PC-9 (cell line): ENCODE measurements at regions of chr15 and their contacts with region 1.

Region 1: DNA sequence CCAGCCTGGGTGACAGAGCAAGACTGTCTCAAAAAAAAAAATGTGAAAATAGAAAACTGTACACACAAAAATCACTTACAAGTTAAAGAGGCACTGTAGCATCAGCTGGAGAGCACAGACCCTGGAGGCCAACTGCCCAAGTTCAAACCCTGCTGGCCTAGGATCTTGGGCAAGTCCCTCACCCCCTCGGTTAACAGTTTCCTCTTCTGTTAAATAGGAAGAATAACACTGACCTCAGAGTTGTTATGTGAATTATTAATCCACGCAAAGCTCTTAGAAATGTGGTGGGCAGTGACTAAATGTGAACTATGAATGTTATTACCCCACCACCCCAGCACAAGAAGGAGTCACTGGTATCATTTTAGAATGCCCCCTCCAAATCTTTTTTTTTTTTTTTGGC is 11.2 kb downstream of the CIB1 start:
- DNase-seq: no peak
- H3K4me3 ChIP-seq: no peak overlapping the region
- H3K27ac ChIP-seq: no peak overlapping the region
- H3K4me1 ChIP-seq: no peaks in the 10 kb centered on the region
- H3K27me3 ChIP-seq: no peaks in the 10 kb centered on the region
- CTCF ChIP-seq: no peak

Region 2: DNA sequence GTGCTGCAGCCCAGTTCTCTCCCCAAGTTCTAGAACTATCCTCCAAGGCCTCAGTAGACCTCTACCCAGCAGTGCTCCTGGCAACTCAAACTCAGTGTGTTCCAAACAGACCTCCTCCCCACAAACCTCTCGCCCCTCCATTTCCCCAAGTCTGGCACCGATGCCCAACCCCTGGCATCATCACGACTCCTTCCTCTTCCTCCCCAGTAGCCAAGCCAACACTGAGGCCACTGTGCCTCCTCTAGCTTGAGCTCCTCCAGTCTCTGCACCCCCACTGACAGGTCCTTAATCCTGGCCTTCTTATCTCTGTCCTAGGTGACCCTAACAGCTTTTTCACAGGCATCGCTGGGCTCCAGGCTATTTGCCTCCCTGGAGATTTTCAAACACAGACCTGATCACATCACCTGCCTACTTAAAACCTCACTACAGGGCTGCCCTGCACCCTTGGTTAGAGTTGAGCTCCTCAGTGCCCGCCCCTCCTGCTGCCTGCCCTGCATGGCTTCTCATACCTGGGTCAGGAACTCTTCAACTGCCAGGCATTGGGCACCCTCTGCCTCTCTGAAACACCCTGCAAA is 316.6 kb before region 1 on chr15:
- CTCF ChIA-PET with region 1: no interaction called
- POLR2A ChIA-PET with region 1: interaction called, 14 read pairs
- intact Hi-C with region 1: no loop called
- DNase-seq: no peak
- H3K4me3 ChIP-seq: no peak overlapping the region
- H3K27ac ChIP-seq: no peak overlapping the region
- H3K4me1 ChIP-seq: peaks cover 3% of the 10 kb centered on the region
- H3K27me3 ChIP-seq: no peaks in the 10 kb centered on the region
- CTCF ChIP-seq: no peak